G401 (cell line): ENCODE measurements at regions of chr11 and their contacts with region 1.

Region 1: DNA sequence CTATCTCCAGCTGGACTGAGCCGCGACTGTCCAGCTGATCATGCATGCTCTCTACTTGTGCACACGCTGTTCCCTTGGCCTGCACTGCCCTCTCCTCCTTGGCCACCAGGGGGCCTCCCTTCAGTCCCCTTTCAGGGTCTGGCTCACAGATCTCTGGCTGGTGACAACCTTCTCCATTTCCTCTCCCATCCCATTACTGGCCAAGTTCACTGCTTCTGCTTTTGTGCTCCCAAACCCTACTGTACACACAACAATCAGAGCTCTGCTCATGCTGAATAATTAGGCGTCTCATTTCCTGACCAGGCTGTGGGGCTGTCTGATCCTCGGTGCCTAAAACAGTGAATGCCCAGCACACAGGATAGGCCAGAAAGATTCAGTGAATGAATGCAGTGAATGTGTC is 224.0 kb upstream of the NARS2 start:
- DNase-seq: peak; percentile 34

Region 2: GRCh38 chr11:79066456-79067351 is 268.0 kb after region 1 on chr11:
- in situ Hi-C with region 1: loop called (anchors 5 kb)
- DNase-seq: no peak